ENCODE measurements at regions of chr1 and their contacts with region 1.

Region 1: DNA sequence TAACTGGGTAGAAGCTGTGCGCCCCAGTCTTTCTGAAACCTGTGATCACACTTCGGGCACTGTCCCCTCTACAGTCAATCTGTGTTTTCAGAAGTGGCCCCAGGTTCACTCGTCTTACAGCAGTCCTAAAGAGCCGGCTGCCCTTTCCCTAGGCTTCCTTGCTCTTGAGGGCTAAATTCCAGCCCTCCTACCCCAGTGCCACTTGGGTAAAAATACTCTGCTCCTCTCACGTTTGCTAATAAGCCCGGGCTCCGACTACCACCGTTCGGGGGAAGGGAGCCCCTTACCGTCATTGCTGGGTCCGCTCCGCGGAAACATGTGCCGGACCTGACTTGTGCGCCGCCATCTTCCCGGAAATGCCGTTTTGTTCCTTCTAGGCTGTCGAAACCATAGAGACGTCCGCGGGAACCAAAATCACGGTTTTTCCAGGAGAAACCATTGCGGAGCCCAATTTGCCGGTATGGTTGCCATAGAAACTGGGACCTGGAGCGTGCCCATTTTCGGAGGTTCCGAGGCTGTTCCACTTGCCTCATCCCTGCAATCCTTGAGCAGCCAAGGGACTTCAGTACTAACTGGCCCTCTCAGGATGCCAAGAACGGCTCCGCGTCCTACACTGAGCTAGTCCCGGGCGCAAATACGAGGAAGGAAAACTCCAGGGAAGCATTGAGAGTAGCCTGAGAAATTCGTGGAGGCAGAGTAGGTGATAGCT is at the start of gene GPATCH4:
- DNase-seq: peak; percentile 75 to 89 (median 78)
- ATAC-seq: peak; percentile 87
- H3K4me3 ChIP-seq: peak within 1 kb of the TSS; percentile 81
- H3K27ac ChIP-seq: peak within 1 kb of the TSS; percentile 80
- H3K4me1 ChIP-seq: peaks cover 12% of the 10 kb centered on the region in 2 experiments; a peak in 4 of 5 replicates
- H3K27me3 ChIP-seq: no peaks in the 10 kb centered on the region
- CTCF ChIP-seq: no peak
- EP300 ChIP-seq: peak; percentile 49; the same call in 1 of the 2 replicates
- POLR2A ChIP-seq: peak; percentile 93
- RAD21 ChIP-seq: 0 out of 4 replicates have a peak, but pooled peaks of 1 of the 2 experiments have one; percentile 10
- polyA plus RNA-seq, gene GPATCH4: 82.1 to 90.8 TPM

Region 2: DNA sequence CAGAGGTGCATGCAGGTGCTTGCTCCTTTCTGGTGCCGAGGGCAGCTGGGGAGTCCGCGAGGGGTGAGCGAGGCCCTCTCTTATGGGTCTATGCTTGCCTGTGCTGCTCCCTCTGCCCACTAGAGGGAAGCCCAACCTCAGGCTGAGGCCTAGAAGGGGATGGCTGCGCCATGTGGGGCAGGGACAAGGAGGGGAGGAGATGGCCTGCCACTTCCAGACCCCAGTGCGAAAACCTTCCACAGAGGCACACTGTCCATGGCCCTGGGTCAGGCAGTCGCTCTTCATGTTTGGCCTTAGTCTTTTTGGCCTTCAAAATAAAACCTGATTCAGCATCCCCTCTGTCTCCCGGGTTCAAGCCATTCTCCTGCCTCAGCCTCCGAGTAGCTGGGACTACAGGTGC is 218.3 kb before region 1 on chr1:
- CTCF ChIA-PET with region 1: interaction called, 3 read pairs
- POLR2A ChIA-PET with region 1: no interaction called
- in situ Hi-C with region 1: loop called (anchors 5 kb)
- intact Hi-C with region 1: no loop called
- DNase-seq: peak; percentile 80 to 86 (median 84)
- ATAC-seq: peak; percentile 98
- H3K4me3 ChIP-seq: no peak overlapping the region
- H3K27ac ChIP-seq: no peak overlapping the region
- H3K4me1 ChIP-seq: peaks cover 8 to 10% of the 10 kb centered on the region in 2 experiments; a peak in 3 of 5 replicates
- H3K27me3 ChIP-seq: peaks cover 5 to 13% of the 10 kb centered on the region in 2 experiments; a peak in 3 of 5 replicates
- CTCF ChIP-seq: peak; percentile 89 to 92 (median 90)
- EP300 ChIP-seq: no peak
- POLR2A ChIP-seq: no peak
- RAD21 ChIP-seq: peak; percentile 78 to 92

Region 3: GRCh38 chr1:156401681-156402081 is 199.6 kb before region 1 on chr1:
- CTCF ChIA-PET with region 1: no interaction called
- POLR2A ChIA-PET with region 1: no interaction called
- in situ Hi-C with region 1: no loop called
- intact Hi-C with region 1: no loop called
- DNase-seq: no peak
- ATAC-seq: peak; percentile 70
- H3K4me3 ChIP-seq: no peak overlapping the region
- H3K27ac ChIP-seq: no peak overlapping the region
- H3K4me1 ChIP-seq: peaks cover 0 to 19% of the 10 kb centered on the region in 2 experiments; a peak in 3 of 5 replicates
- H3K27me3 ChIP-seq: peaks cover 10 to 37% of the 10 kb centered on the region in 2 experiments; a peak in 4 of 5 replicates
- CTCF ChIP-seq: no peak
- EP300 ChIP-seq: no peak
- POLR2A ChIP-seq: no peak
- RAD21 ChIP-seq: no peak

Measured in K562 (cell line).